AG04449 (cell line): ENCODE measurements at regions of chr11 and their contacts with region 1.

Region 1: DNA sequence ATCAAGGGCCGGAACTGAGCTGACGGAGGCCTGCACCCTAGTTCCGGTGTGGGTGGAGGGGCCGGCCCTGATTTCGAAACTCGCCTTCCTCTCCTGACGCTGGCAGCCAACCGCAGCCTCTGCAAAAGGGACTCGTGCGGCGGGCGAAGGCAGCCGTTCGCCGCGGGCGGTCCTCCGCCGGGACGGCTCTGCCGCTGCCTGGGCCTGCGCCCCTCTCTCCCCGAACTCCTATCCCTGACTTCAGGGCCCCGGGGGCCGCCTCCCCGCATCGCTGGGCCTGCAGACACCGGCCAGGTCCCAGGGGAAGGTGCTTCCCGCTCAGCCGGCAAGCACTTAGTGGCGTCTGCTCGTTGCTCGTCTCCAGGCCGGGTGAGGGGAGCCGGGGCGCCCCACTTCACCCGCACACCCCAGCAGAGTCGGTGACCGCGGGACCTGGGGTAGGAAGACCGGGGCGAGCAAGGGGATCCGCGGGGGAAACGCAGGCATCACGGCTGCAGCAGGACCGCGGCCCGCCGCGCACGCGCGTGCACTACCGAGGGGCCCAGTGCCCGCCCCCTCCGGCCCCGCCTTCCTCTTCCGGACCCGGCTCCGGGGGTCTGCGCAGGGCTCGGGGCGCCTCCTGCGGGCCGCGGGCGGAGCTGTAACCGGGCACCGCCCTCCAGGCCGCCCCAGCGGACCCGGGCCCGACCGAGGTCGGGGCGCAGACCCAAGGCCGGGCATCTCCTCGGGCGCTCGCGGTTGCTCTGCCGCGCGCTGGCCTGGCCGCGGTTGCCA is 464 bp upstream of the ANKRD13D start:
- DNase-seq: peak; percentile 59
- H3K4me3 ChIP-seq: peak overlapping the region; percentile 77
- CTCF ChIP-seq: peak; percentile 55

Region 2: DNA sequence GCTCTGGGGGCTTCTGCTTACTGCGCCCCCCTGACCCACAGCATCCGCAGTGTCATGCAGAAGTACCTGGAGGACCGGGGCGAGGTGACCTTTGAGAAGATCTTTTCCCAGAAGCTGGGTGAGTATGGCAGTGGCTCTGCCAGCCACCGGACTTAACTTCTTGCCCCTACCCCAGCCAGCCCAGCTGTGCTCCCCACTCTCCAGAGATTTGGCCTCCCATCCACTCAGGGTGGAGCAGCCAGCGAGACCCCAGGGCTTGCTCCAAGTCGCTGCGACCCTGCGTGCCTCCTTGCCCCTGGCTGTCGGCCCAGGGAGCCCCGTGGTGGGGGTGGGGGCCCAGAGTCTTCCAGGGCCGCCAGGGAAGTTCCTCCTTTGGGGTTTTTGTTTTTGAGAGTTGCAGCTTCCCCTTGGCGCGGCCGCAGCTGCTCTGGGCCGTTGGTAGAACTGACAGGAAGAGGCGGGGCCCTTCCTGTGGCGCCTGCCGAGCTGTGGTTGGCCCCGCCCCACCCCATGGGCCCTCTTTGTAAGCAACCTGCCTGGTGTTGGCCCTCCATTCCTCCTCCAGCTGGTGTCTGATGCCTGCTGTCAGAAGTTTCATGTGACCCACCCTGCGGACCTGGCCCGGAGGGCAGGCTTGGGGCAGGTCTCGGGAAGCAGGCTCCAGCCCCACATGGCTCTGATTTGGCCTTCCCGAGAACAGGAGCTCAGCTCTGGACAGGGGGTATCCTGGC is 11.2 kb before region 1 on chr11:
- CTCF ChIA-PET with region 1: interaction called, 20 read pairs
- POLR2A ChIA-PET with region 1: interaction called, 18 read pairs
- DNase-seq: no peak
- H3K4me3 ChIP-seq: peak overlapping the region; percentile 52
- CTCF ChIP-seq: no peak

Region 3: DNA sequence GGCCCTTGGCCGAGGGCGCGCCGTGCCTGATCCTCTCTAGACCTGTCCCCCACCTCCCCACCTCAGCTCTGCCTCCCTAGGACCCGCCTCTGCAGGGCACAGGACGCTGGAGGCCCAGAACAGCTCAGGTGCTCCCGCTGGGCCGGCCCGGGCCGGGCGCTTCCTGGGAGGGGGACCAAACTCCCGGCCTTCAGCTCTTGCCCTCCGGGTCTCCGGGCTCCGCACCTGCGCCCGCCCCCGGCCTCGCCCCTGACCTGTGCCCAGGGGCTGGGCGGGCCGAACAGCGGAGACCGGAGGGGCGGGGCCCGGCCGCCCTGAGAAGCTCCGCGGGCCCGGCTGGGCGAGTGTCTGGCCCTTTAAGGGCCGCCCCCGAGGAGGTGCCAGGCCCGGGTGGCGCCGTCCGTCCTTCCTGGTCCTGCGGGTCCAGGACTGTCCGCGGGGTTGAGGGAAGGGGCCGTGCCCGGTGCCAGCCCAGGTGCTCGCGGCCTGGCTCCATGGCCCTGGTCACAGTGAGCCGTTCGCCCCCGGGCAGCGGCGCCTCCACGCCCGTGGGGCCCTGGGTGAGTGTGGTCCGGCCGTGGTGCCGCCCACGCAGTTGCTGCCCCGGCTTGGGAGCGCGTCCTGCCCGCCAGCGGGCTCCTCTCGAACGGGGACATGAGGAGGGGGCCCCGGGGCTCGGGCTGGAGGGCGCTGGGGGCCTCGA is 14.6 kb after region 1 on chr11 and contains the start of gene SSH3:
- CTCF ChIA-PET with region 1: interaction called, 11 read pairs
- POLR2A ChIA-PET with region 1: interaction called, 5 read pairs
- DNase-seq: no peak
- H3K4me3 ChIP-seq: peak within 1 kb of the TSS; percentile 86
- CTCF ChIP-seq: no peak